Activated naive CD4-positive, alpha-beta T cell treated with anti-CD3 and anti-CD28 coated beads for 36 hours (primary cell): ENCODE measurements at regions of chr11 and their contacts with region 1.

Region 1: GRCh38 chr11:108807262-108807661 is 142.4 kb downstream of the DDX10 start:
- DNase-seq: no peak
- H3K4me3 Mint-ChIP-seq: no peak overlapping the region
- H3K27ac Mint-ChIP-seq: no peak overlapping the region
- H3K4me1 Mint-ChIP-seq: peaks cover 4% of the 10 kb centered on the region
- H3K27me3 Mint-ChIP-seq: no peaks in the 10 kb centered on the region

Region 2: DNA sequence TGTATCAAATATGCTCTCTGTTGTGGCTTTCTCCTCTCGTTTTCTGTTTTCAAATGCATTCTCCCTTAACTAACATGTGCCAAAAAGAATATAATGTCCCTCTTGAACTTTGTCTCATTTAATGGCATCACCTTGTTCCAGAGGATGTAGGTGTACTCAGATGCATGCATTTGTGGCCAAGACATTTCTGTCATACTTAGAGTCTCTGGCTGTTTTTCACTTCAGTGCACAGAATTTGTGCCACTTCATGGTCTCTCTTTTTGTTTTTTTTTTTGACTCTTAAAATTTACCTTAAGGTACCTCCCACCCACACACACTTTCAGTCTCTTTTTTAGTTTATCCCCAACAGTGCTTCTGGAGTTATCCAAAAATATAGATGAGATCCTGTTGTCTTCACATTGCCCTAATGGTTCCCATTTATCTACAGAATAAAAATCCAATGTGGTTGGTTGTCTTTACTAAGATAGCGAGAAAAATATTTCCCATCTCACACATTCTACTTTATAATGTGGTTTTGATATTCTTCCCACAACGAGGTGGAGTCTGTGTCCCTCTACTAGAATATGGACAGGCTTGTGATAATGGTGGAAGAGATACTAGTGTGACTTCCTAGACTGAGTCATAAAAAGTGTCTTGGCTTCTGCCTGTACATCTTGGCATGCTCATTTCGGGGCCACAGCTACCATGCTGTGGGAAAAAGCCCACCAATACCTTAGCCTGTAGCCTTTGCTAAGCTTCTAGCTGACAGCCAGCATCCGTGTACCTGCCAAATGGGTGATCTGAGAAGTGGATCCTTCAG is 16.6 kb before region 1 on chr11:
- CTCF ChIA-PET with region 1: no interaction called
- intact Hi-C with region 1: loop called (anchors 1 kb)
- DNase-seq: no peak
- H3K4me3 Mint-ChIP-seq: no peak overlapping the region
- H3K27ac Mint-ChIP-seq: no peak overlapping the region
- H3K4me1 Mint-ChIP-seq: peaks cover 35% of the 10 kb centered on the region
- H3K27me3 Mint-ChIP-seq: no peaks in the 10 kb centered on the region

Region 3: DNA sequence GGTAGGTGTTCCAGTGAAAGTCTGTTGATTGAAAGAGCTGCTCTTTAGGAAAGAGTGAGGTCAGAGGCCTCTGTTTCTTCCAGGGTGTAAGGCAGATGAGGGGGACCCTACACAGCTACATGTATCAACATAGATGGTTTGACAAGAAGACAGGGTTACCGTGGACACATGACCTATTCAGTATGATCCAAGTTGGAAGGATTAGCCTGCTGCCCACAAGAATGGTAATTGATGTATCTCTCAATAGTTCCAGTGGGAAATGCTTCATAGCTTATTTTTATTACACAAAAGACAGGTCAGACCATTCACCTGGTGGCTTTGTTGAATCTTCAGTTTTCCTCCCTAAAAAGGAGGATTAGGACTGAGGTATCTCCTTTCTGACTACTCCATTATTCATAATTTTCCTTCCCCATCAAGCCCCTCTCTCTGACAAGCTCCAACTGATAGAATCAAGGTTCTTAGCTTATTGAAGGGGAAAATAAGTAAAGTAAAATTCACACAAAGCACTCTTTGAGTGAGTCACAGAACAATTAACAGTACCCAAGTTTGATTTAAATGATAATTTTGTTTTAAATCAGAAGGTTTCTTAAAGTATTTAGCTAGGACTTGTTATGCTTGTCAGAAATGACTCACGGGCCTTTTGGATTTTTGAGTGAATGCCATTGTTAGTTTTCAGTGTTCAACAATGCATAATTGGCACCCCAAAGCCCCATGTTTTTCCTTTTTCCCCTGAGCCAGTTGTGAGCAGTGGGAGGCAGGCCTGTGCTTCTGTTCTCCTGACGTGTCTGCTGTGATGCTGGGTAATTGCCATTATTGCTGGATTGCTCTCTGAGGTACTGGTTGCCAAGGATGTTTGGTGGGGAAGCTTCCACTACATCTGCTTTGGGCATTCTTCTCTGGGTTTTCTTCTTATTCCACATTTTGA is 230.9 kb after region 1 on chr11:
- CTCF ChIA-PET with region 1: no interaction called
- intact Hi-C with region 1: no loop called
- DNase-seq: no peak
- H3K4me3 Mint-ChIP-seq: no peak overlapping the region
- H3K27ac Mint-ChIP-seq: no peak overlapping the region
- H3K4me1 Mint-ChIP-seq: no peaks in the 10 kb centered on the region
- H3K27me3 Mint-ChIP-seq: no peaks in the 10 kb centered on the region